ENCODE measurements at regions of chr1 and their contacts with region 1.

Region 1: DNA sequence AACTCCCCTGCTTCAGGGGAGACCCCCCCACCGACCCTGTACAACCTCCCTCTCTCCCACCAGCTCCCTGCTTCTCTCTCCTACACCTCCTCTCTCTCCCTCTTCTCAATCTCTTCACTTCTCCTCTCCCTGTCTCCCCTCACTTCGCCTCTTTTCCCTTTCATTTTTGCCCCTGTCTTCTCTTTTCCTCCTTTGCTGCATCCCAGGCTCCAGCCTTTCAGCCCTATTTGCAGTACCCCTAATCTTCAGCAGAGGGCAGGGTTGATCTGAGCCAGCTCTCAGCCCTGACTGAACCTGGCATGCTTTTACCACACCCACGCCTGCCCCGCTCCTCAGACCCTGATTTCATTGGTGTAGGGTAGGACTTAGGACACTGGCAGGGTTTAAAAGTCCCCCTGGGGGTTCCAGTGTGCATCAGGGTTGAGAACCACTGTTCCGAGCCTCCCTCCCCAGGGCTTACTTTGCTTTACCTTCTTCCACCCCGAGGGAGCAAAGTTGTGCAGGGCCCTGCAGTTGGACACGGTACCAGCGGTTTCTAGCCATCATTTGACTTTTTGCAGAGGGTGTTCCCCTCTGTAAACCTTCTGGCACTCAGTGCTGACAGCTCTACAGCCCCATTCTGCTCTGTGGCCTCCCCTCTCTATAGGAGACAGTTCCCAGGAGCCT is 67.3 kb upstream of the CNTN2 start:
- DNase-seq: peak; percentile 41 to 91
- ATAC-seq: peak; percentile 78 to 93
- H3K4me3 ChIP-seq: no peak overlapping the region
- H3K27ac ChIP-seq: no peak overlapping the region
- H3K4me1 ChIP-seq: peaks cover 12% of the 10 kb centered on the region
- CTCF ChIP-seq: peak; percentile 60
- EP300 ChIP-seq: no peak
- POLR2A ChIP-seq: no peak
- RAD21 ChIP-seq: peak; percentile 71 to 79

Region 2: GRCh38 chr1:204950353-204951001 is 25.2 kb before region 1 on chr1:
- CTCF ChIA-PET with region 1: interaction called, 16 read pairs
- POLR2A ChIA-PET with region 1: no interaction called
- DNase-seq: no peak
- ATAC-seq: no peak
- H3K4me3 ChIP-seq: no peak overlapping the region
- H3K27ac ChIP-seq: no peak overlapping the region
- H3K4me1 ChIP-seq: no peaks in the 10 kb centered on the region
- CTCF ChIP-seq: no peak
- EP300 ChIP-seq: no peak
- POLR2A ChIP-seq: no peak
- RAD21 ChIP-seq: no peak

Region 3: GRCh38 chr1:204961765-204962419 is 13.8 kb before region 1 on chr1:
- CTCF ChIA-PET with region 1: interaction called, 43 read pairs
- POLR2A ChIA-PET with region 1: no interaction called
- DNase-seq: no peak
- ATAC-seq: no peak
- H3K4me3 ChIP-seq: no peak overlapping the region
- H3K27ac ChIP-seq: no peak overlapping the region
- H3K4me1 ChIP-seq: no peaks in the 10 kb centered on the region
- CTCF ChIP-seq: no peak
- EP300 ChIP-seq: no peak
- POLR2A ChIP-seq: no peak
- RAD21 ChIP-seq: peak in 1 of 2 experiments; percentile 17; a peak in 1 of 5 replicates

Region 4: GRCh38 chr1:205032508-205032907 is 56.8 kb after region 1 on chr1:
- CTCF ChIA-PET with region 1: interaction called, 17 read pairs
- POLR2A ChIA-PET with region 1: no interaction called
- DNase-seq: no peak
- ATAC-seq: no peak
- H3K4me3 ChIP-seq: no peak overlapping the region
- H3K27ac ChIP-seq: no peak overlapping the region
- H3K4me1 ChIP-seq: no peaks in the 10 kb centered on the region
- CTCF ChIP-seq: no peak
- EP300 ChIP-seq: no peak
- POLR2A ChIP-seq: no peak
- RAD21 ChIP-seq: no peak

Region 5: GRCh38 chr1:205077158-205077933 is 101.6 kb after region 1 on chr1:
- CTCF ChIA-PET with region 1: interaction called, 10 read pairs
- POLR2A ChIA-PET with region 1: no interaction called
- DNase-seq: no peak
- ATAC-seq: no peak
- H3K4me3 ChIP-seq: no peak overlapping the region
- H3K27ac ChIP-seq: no peak overlapping the region
- H3K4me1 ChIP-seq: no peaks in the 10 kb centered on the region
- CTCF ChIP-seq: no peak
- EP300 ChIP-seq: no peak
- POLR2A ChIP-seq: no peak
- RAD21 ChIP-seq: no peak

Region 6: GRCh38 chr1:205141236-205142101 is 165.8 kb after region 1 on chr1:
- CTCF ChIA-PET with region 1: interaction called, 25 read pairs
- POLR2A ChIA-PET with region 1: no interaction called
- DNase-seq: peak; percentile 76 to 83
- ATAC-seq: peak; percentile 88 to 94
- H3K4me3 ChIP-seq: no peak overlapping the region
- H3K27ac ChIP-seq: peak overlapping the region in 1 of 2 experiments; percentile 63; a peak in 2 of 6 replicates
- H3K4me1 ChIP-seq: peaks cover 16% of the 10 kb centered on the region
- CTCF ChIP-seq: peak; percentile 82
- EP300 ChIP-seq: no peak
- POLR2A ChIP-seq: no peak
- RAD21 ChIP-seq: peak; percentile 52 to 59; a peak in 4 of 5 replicates

Measured in A549 (cell line).